ENCODE measurements at regions of chr11 and their contacts with region 1.

Region 1: DNA sequence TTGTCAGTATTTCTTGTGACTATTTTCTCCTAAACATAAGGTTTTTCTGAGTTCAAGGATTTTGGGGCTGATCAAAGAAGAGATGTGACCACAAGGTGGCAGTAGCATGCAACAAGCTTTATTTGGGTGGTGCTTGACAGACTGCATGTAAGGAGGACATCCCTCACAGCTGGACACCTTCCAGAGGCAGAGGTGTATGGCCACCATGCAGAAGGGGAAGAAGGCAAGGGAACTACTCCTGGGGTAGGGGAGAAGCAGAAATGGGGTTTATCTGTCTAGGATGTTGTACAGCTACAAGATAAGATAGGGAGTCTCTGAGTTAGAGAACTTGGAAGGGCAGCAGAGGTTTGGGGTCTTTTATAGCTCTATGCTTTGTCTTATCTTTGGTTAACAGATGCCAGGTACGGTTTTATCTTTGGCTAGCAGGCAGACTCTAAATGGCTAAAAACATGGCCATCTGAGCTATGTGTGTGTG is 5.1 kb upstream of the BIRC2 start:
- DNase-seq: peak in 4 of 5 donors; percentile 72 to 77 (median 74)
- ATAC-seq: peak in 3 of 4 donors; percentile 56 to 74 (median 66)
- H3K4me3 ChIP-seq: no peak overlapping the region
- H3K27ac ChIP-seq: no peak overlapping the region
- H3K4me1 ChIP-seq: peaks cover 0 to 9% (median 7%) of the 10 kb centered on the region in 12 donors
- H3K27me3 ChIP-seq: no peaks in the 10 kb centered on the region
- CTCF ChIP-seq: peak; percentile 65 to 86 (median 80)
- POLR2A ChIP-seq: no peak

Region 2: GRCh38 chr11:102287964-102288724 is 53.7 kb before region 1 on chr11:
- intact Hi-C with region 1: loop called in 8 of 10 experiments (anchors 2 to 10 kb)
- DNase-seq: peak in 3 of 5 donors; percentile 23 to 31 (median 28)
- ATAC-seq: peak; percentile 78 to 92 (median 82)
- H3K4me3 ChIP-seq: peak overlapping the region in 8 of 12 donors; percentile 10 to 42 (median 28)
- H3K27ac ChIP-seq: no peak overlapping the region
- H3K4me1 ChIP-seq: peaks cover 0 to 23% (median 0%) of the 10 kb centered on the region in 12 donors
- H3K27me3 ChIP-seq: no peaks in the 10 kb centered on the region
- CTCF ChIP-seq: peak; percentile 66 to 84 (median 76)
- POLR2A ChIP-seq: no peak

Region 3: GRCh38 chr11:102518296-102519094 is 176.6 kb after region 1 on chr11:
- intact Hi-C with region 1: no loop called
- DNase-seq: no peak
- ATAC-seq: no peak
- H3K4me3 ChIP-seq: no peak overlapping the region
- H3K27ac ChIP-seq: no peak overlapping the region
- H3K4me1 ChIP-seq: no peaks in the 10 kb centered on the region
- H3K27me3 ChIP-seq: peaks cover 0 to 4% (median 0%) of the 10 kb centered on the region in 9 donors
- CTCF ChIP-seq: no peak
- POLR2A ChIP-seq: no peak

Region 4: DNA sequence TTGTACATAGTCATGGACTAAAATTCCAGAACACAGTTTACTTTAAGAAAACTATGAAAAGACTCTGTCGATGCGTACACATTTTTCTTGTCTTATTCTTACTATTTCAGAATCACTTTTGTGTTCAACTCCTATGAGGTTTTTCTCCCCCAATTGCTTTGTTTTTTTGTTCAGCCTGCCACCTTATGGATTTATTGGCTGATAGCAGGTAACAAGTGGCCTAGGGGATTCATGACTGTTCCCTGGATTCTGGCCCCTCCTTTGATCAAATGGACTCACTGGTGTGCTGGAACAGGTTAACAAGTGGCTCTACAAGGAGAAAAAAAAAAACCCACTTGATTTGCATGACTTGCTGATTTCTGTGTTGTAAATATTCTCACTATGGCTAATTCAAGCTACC is 272.6 kb after region 1 on chr11:
- intact Hi-C with region 1: loop called in 1 of 10 experiments (anchors 5 kb)
- DNase-seq: no peak
- ATAC-seq: no peak
- H3K4me3 ChIP-seq: no peak overlapping the region
- H3K27ac ChIP-seq: no peak overlapping the region
- H3K4me1 ChIP-seq: no peaks in the 10 kb centered on the region
- H3K27me3 ChIP-seq: no peaks in the 10 kb centered on the region
- CTCF ChIP-seq: no peak
- POLR2A ChIP-seq: no peak

Measured in heart left ventricle (tissue), 16 donors.